Activated T-helper 2 cell treated with anti-CD3 and anti-CD28 coated beads, Interferon-gamma antibody, Interleukin-2, Interleukin-4, amounts not matched to agents 10 μg/mL and 5 μg/mL and 100 μg/mL, durations not matched to agents 14 hours and 24 hours and 36 hours (primary cell): ENCODE measurements at regions of chr6 and their contacts with region 1.

Region 1: GRCh38 chr6:11917951-11918738 is 94.0 kb upstream of the HIVEP1 start:
- DNase-seq: no peak
- H3K4me3 Mint-ChIP-seq: no peak overlapping the region
- H3K27ac Mint-ChIP-seq: no peak overlapping the region
- H3K4me1 Mint-ChIP-seq: peaks cover 3% of the 10 kb centered on the region
- H3K27me3 Mint-ChIP-seq: no peaks in the 10 kb centered on the region

Region 2: DNA sequence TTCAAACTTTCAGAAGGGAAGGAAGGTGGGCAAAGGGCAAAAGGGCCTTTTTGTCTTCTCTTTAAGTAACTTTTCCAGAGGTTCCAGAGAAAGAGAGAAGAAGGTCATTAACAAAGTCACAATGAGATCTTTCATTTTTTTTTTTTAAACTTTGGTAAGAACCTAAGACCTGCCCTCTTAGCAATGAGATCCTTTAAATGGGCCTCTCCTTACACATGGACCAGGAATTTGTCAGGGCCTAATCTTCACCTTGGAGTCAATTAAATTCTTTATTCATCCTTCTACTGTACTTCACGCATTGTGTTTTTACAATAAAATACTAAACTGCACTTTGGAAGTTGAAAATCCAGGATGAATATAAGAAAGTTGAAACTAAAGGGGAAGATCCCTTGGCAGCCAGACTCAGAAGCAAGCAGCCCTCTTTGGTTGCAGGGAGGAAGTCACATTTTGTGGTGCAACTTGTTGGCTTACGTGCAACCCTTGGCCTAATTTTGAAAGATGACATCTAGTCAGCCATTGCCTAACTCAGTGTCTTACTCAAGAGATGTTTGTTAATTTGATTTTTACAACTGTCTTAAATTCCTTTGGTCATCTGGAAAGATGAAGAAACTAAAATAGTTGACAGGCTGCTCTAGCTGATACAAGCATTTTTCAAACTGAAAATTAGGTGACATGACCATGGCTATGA is 392.5 kb before region 1 on chr6:
- intact Hi-C with region 1: no loop called
- DNase-seq: no peak
- H3K4me3 Mint-ChIP-seq: no peak overlapping the region
- H3K27ac Mint-ChIP-seq: no peak overlapping the region
- H3K4me1 Mint-ChIP-seq: no peaks in the 10 kb centered on the region
- H3K27me3 Mint-ChIP-seq: peaks cover 20% of the 10 kb centered on the region

Region 3: DNA sequence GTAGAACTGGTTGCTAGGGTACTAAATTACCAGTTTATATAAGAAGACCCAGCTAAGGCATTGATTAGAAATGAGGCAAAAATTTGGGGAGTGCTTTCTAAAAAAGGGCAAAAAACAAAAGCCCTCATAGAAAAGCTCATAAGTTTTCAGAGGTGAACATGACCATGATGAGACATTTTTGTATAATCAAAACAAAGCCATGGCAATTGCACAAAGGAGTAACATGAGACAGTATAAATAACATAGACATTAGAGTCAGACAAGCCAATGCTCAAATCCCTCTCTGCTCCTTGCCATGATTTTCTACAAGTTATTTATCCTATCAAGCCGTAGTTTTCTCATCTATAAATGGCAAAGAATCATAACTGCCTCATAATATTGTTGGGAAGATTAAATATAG is 27.3 kb before region 1 on chr6:
- intact Hi-C with region 1: no loop called
- DNase-seq: no peak
- H3K4me3 Mint-ChIP-seq: no peak overlapping the region
- H3K27ac Mint-ChIP-seq: no peak overlapping the region
- H3K4me1 Mint-ChIP-seq: no peaks in the 10 kb centered on the region
- H3K27me3 Mint-ChIP-seq: peaks cover 25% of the 10 kb centered on the region

Region 4: DNA sequence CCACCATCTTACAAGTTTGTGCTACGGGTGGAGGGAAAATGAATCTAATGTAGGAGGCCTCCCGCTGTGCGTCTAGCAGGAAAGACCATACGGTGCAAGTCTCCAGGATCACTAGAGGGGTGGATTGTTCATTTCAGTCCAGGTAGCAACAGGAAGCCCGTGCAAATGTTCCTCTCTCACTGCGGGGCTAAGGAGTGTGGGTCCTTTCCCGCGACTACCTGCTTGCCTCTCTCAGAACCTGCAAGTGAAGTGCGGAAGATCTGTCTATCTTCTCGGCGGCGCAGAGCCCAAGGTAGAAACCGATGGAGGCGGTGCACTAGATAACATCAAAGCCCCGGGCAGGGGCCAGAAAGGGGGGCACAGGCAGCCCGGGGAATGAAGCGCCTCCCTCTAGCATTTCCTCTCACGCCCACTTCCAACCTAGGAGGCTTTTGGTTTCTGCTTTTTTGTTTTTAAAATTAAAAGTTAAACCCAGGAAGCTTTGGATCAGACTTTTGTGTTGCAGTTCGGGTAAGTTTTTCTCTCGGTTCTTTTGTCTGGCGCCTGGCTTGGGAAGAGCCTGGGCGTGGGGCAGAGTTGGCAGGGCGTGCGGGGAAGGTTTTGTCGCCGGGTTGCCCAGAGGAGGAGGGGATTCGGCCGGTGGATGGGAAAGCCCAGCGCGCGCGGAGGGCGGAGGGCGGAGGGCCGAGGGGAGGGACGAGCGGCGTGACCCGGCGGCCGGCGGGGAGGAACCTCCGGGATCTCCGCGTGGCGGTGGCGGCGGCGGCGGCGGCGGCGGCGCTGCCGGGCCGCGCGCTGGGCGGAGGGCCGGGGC is 90.4 kb after region 1 on chr6:
- intact Hi-C with region 1: no loop called
- DNase-seq: peak; percentile 79
- H3K4me3 Mint-ChIP-seq: peak overlapping the region; percentile 98
- H3K27ac Mint-ChIP-seq: peak overlapping the region; percentile 100
- H3K4me1 Mint-ChIP-seq: peaks cover 27% of the 10 kb centered on the region
- H3K27me3 Mint-ChIP-seq: no peaks in the 10 kb centered on the region

Region 5: GRCh38 chr6:12275087-12275486 is 356.9 kb after region 1 on chr6:
- intact Hi-C with region 1: loop called (anchors 10 kb)
- DNase-seq: no peak
- H3K4me3 Mint-ChIP-seq: no peak overlapping the region
- H3K27ac Mint-ChIP-seq: no peak overlapping the region
- H3K4me1 Mint-ChIP-seq: peaks cover 15% of the 10 kb centered on the region
- H3K27me3 Mint-ChIP-seq: peaks cover 10% of the 10 kb centered on the region